GM18951 (cell line): ENCODE measurements at regions of chr6 and their contacts with region 1.

Region 1: DNA sequence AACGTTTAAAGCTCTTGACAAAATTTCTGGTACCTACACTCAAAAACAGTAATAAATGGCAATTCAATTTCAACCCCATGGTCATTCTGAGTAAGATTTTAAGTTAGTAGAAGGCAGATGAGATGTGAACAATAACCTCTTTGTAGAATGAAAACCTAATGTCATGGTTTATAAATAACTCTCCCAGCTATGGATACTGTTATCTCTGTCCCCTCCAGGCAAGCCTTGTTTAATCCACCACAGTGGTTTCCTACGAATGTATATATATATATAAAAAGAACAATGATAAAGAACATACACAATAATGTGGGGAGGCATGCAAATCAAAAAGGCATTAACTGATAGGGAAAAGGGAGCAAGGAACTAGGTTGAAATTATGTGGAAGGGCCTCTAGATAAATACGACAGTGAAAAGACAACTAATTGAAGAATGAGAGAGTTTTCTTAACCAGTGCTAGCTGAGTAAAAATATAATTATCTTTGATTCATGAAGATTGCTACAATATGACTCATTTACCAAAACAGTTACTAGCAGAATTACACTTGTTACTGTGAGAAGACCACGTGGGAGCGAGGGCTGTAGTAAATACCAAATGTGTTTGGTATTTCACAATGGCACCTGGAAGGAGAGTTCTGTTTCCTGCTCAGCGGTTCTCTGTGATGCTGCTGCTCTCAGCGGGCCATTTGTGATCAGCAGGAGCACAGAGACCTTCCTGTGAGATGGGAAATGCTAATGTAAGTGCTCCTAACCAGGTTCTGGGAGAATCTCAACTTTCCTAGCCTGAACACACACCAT is 173.7 kb downstream of the MBOAT1 start:
- POLR2A ChIP-seq: no peak

Region 2: GRCh38 chr6:19024737-19025136 is 1013.9 kb before region 1 on chr6:
- in situ Hi-C with region 1: loop called (anchors 25 kb)
- POLR2A ChIP-seq: no peak